ENCODE measurements at regions of chrX and their contacts with region 1.

Region 1: GRCh38 chrX:102835504-102836146 is 101.4 kb upstream of the RAB40AL start:
- DNase-seq: no peak
- ATAC-seq: no peak
- H3K4me3 ChIP-seq: no peak overlapping the region
- H3K27ac ChIP-seq: no peak overlapping the region
- H3K4me1 ChIP-seq: no peaks in the 10 kb centered on the region
- H3K27me3 ChIP-seq: no peaks in the 10 kb centered on the region
- CTCF ChIP-seq: peak; percentile 16 to 53 (median 36)
- POLR2A ChIP-seq: no peak

Region 2: DNA sequence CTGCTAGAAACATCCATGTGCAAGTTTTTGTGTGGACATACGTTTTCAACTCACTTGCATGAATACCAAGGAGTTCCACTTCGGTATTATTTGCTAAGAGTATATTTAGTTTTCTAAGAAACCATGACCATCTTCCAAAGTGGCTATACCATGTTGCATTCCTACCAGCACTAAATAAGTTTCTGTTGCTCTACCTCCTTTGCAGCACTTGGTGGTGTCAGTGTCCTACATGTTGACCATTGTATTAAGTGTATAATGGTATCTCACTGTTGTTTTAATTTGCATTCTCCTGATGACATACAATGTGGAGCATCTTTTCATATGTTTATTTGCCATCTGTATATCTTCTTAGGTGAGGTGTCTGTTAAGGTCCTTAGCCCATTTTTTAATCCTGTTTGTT is 192.3 kb before region 1 on chrX:
- intact Hi-C with region 1: no loop called
- DNase-seq: no peak
- ATAC-seq: no peak
- H3K4me3 ChIP-seq: no peak overlapping the region
- H3K27ac ChIP-seq: no peak overlapping the region
- H3K4me1 ChIP-seq: no peaks in the 10 kb centered on the region
- H3K27me3 ChIP-seq: no peaks in the 10 kb centered on the region
- CTCF ChIP-seq: no peak
- POLR2A ChIP-seq: no peak

Region 3: DNA sequence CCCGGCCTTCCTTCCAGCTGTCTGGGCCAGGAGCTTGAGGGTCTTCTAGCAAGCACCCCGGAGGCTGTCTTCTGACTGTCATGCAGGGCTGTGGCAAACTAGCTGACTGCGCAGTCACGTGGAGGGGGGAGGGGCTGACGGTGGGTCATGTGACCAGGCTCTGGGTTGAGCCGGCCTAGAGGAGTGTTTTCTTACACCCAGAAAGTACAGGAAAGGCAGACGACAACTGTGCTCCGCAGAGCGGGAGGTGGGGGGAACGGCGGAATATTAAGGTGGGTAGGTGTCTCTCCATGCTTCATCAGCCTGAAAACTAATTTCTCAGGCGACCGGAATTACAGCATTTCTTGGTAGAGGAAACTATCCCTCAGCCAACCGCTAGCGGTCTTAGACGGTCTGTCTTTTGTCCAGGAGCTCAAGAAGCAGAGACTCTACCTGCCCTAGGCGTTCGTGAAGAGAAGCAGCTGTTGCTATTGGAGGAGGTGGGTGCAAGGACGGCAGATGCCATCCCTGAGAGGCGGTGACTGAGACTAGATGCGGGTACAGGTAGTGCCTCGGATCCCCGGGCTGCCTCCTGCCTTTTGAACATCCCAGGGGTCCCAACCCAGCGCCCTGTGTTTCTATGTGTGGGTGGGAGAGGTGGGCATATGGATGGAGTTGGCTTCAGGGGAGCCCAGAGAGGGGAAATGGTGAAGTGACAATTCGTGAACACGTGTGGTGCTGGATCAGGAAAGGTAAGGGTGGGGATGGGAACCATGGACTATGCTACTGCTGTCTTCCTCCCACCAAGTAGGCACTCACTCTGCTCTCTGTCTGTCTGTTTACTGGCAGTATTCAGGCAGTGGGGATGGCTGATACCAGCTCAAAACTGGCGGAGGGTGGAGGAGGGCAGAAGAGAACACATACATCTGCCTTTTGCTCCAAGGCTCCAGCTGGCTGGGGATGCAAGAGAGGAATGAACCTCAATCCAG is 175.6 kb before region 1 on chrX:
- intact Hi-C with region 1: no loop called
- DNase-seq: peak; percentile 83 to 90 (median 87)
- ATAC-seq: peak; percentile 96 to 100 (median 98)
- H3K4me3 ChIP-seq: peak overlapping the region; percentile 5 to 68 (median 48)
- H3K27ac ChIP-seq: peak overlapping the region in 9 of 12 donors; percentile 19 to 73 (median 51)
- H3K4me1 ChIP-seq: peaks cover 0 to 14% (median 0%) of the 10 kb centered on the region in 12 donors
- H3K27me3 ChIP-seq: no peaks in the 10 kb centered on the region
- CTCF ChIP-seq: peak in 1 of 12 donors; percentile 12
- POLR2A ChIP-seq: peak in 1 of 2 donors; percentile 46

Region 4: GRCh38 chrX:102720237-102721168 is 115.1 kb before region 1 on chrX and contains the start of gene GPRASP3:
- intact Hi-C with region 1: loop called in 1 of 10 experiments (anchors 10 kb)
- DNase-seq: peak; percentile 69 to 81 (median 77)
- ATAC-seq: peak; percentile 95 to 98 (median 96)
- H3K4me3 ChIP-seq: peak within 1 kb of the TSS; percentile 18 to 69 (median 53)
- H3K27ac ChIP-seq: peak within 1 kb of the TSS in 6 of 12 donors; percentile 18 to 68 (median 34)
- H3K4me1 ChIP-seq: peaks cover 0 to 7% (median 0%) of the 10 kb centered on the region in 12 donors
- H3K27me3 ChIP-seq: peaks cover 0 to 3% (median 0%) of the 10 kb centered on the region in 9 donors
- CTCF ChIP-seq: no peak
- POLR2A ChIP-seq: no peak
- total RNA-seq, gene GPRASP3: 3.1 to 9.6 (median 5.4) TPM